SK-N-SH (cell line): ENCODE measurements at regions of chr14 and their contacts with region 1.

Region 1: GRCh38 chr14:28773861-28774691 is 7.5 kb downstream of the FOXG1 start:
- DNase-seq: no peak
- H3K4me3 ChIP-seq: peak overlapping the region in 1 of 2 experiments; percentile 50; a peak in 1 of 4 replicates
- H3K27ac ChIP-seq: no peak overlapping the region
- H3K4me1 ChIP-seq: no peaks in the 10 kb centered on the region
- H3K27me3 ChIP-seq: peaks cover 57% of the 10 kb centered on the region
- CTCF ChIP-seq: peak; percentile 42
- EP300 ChIP-seq: no peak
- RAD21 ChIP-seq: peak; percentile 20; the same call in 1 of the 2 replicates

Region 2: GRCh38 chr14:28756884-28757570 is 17.0 kb before region 1 on chr14:
- CTCF ChIA-PET with region 1: interaction called, 10 read pairs
- POLR2A ChIA-PET with region 1: no interaction called
- DNase-seq: peak; percentile 52
- H3K4me3 ChIP-seq: peak overlapping the region in 1 of 2 experiments; percentile 40; a peak in 1 of 4 replicates
- H3K27ac ChIP-seq: no peak overlapping the region
- H3K4me1 ChIP-seq: no peaks in the 10 kb centered on the region; a peak in 1 of 4 replicates
- H3K27me3 ChIP-seq: peaks cover 75% of the 10 kb centered on the region
- CTCF ChIP-seq: peak; percentile 84
- EP300 ChIP-seq: no peak
- RAD21 ChIP-seq: peak; percentile 45

Region 3: GRCh38 chr14:28902930-28903329 is 128.9 kb after region 1 on chr14:
- CTCF ChIA-PET with region 1: no interaction called
- POLR2A ChIA-PET with region 1: no interaction called
- DNase-seq: no peak
- H3K4me3 ChIP-seq: no peak overlapping the region
- H3K27ac ChIP-seq: no peak overlapping the region
- H3K4me1 ChIP-seq: no peaks in the 10 kb centered on the region
- H3K27me3 ChIP-seq: no peaks in the 10 kb centered on the region
- CTCF ChIP-seq: no peak
- EP300 ChIP-seq: no peak
- RAD21 ChIP-seq: no peak